Pancreas (tissue), 10 donors: ENCODE measurements at regions of chr1 and their contacts with region 1.

Region 1: DNA sequence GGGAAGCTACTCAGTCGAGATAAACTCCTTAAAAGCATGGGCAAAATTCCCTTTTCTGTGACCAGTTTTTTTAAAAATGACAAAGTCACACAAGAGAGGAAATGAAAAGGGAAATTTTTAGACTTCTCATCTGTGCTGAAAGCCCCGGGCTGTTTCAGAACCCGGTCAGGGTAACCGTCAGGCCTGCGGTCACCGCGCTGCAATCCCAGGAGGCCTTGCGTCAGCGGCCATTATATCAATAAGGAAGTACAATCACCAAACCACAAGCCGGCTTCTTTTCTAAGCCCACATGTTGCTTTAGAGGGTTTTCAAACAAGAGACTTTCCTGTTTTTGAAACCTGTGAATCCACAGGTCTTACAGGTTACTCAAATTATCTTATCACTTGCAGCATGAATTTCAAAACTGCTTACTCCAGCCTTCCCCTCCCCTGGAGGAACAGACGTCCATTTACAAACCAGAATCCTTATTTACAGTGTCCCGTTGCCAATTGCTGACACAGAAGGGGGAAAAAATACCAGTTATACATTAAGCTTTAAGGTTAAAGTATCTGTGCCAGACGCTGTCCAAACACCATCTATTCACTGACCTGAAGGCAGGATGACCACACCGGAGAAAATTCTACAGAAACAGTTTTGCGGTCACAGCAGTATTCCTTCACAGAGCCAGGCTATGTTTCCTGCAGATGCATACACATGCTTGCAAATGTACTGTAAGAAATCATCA is 165.3 kb downstream of the TOMM20 start:
- DNase-seq: peak in 4 of 6 donors; percentile 48 to 82 (median 67)
- ATAC-seq: peak in 3 of 4 donors; percentile 26 to 61 (median 40)
- H3K4me3 ChIP-seq: no peak overlapping the region
- H3K27ac ChIP-seq: peak overlapping the region; percentile 46 to 87 (median 76)
- H3K4me1 ChIP-seq: peaks cover 50 to 68% (median 56%) of the 10 kb centered on the region in 3 donors
- H3K27me3 ChIP-seq: no peaks in the 10 kb centered on the region
- CTCF ChIP-seq: no peak

Region 2: GRCh38 chr1:234610348-234611152 is 352.8 kb before region 1 on chr1:
- intact Hi-C with region 1: loop called in 1 of 3 experiments (anchors 5 kb)
- DNase-seq: peak; percentile 95 to 98 (median 96)
- ATAC-seq: peak; percentile 59 to 75 (median 62)
- H3K4me3 ChIP-seq: peak overlapping the region; percentile 13 to 96 (median 44)
- H3K27ac ChIP-seq: peak overlapping the region; percentile 99 to 100 (median 100)
- H3K4me1 ChIP-seq: peaks cover 29 to 36% (median 35%) of the 10 kb centered on the region in 3 donors
- H3K27me3 ChIP-seq: no peaks in the 10 kb centered on the region
- CTCF ChIP-seq: no peak

Region 3: GRCh38 chr1:235075188-235075926 is 112.0 kb after region 1 on chr1:
- intact Hi-C with region 1: loop called in 1 of 3 experiments (anchors 5 kb)
- DNase-seq: peak in 5 of 6 donors; percentile 57 to 73 (median 62)
- ATAC-seq: peak in 3 of 4 donors; percentile 7 to 51 (median 11)
- H3K4me3 ChIP-seq: no peak overlapping the region
- H3K27ac ChIP-seq: peak overlapping the region; percentile 90 to 98 (median 96)
- H3K4me1 ChIP-seq: peaks cover 37 to 72% (median 64%) of the 10 kb centered on the region in 3 donors
- H3K27me3 ChIP-seq: no peaks in the 10 kb centered on the region
- CTCF ChIP-seq: no peak